PC-9 (cell line): ENCODE measurements at regions of chr17 and their contacts with region 1.

Region 1: GRCh38 chr17:1413281-1413791 is 13.3 kb upstream of the YWHAE start:
- DNase-seq: peak; percentile 83 to 84
- H3K4me3 ChIP-seq: no peak overlapping the region
- H3K27ac ChIP-seq: no peak overlapping the region
- H3K4me1 ChIP-seq: peaks cover 14% of the 10 kb centered on the region
- H3K27me3 ChIP-seq: no peaks in the 10 kb centered on the region
- CTCF ChIP-seq: no peak

Region 2: GRCh38 chr17:726271-726919 is 686.9 kb before region 1 on chr17:
- CTCF ChIA-PET with region 1: no interaction called
- POLR2A ChIA-PET with region 1: interaction called, 31 read pairs
- intact Hi-C with region 1: no loop called
- DNase-seq: no peak
- H3K4me3 ChIP-seq: no peak overlapping the region
- H3K27ac ChIP-seq: no peak overlapping the region
- H3K4me1 ChIP-seq: no peaks in the 10 kb centered on the region
- H3K27me3 ChIP-seq: no peaks in the 10 kb centered on the region
- CTCF ChIP-seq: no peak

Region 3: DNA sequence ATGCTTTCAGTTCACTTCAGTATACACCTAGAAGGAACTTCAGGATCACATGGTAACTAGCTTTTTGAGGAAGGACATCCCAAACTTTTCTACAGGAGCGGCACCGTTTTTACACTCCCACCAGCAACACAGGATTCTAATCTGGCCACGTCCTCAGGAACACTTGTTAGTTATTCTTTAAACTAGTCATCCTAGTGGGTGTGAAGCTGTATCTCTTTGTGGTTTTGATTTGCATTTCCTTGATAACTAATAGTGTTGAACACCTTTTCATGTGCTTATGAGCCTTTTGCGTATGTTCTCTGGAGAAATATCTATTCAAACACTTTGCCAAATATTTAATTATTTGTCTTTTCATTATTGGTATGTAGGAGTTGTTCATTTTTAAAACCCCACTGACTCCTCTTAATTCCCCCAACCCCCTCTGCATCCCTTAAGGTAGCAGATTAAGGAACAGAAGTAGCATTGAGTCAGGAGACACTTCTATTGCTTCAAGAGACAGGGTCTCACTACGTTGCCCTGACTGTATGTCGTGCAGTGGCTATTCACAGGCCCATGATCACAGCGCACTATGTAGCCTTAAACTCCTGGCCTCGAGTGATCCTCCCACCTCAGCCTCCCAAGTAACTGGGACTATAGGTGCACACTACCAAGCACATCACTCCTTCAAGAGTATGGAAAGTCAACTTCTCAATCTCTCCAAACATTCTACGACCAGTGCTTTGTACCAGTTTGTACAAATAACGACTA is 38.7 kb before region 1 on chr17:
- CTCF ChIA-PET with region 1: no interaction called
- POLR2A ChIA-PET with region 1: interaction called, 15 read pairs
- intact Hi-C with region 1: no loop called
- DNase-seq: no peak
- H3K4me3 ChIP-seq: no peak overlapping the region
- H3K27ac ChIP-seq: no peak overlapping the region
- H3K4me1 ChIP-seq: no peaks in the 10 kb centered on the region
- H3K27me3 ChIP-seq: no peaks in the 10 kb centered on the region
- CTCF ChIP-seq: no peak

Region 4: GRCh38 chr17:1379930-1380313 is 33.4 kb before region 1 on chr17:
- CTCF ChIA-PET with region 1: no interaction called
- POLR2A ChIA-PET with region 1: interaction called, 11 read pairs
- intact Hi-C with region 1: no loop called
- DNase-seq: no peak
- H3K4me3 ChIP-seq: no peak overlapping the region
- H3K27ac ChIP-seq: no peak overlapping the region
- H3K4me1 ChIP-seq: 0 out of 2 replicates have a peak, but pooled peaks cover 6% of the 10 kb centered on the region
- H3K27me3 ChIP-seq: no peaks in the 10 kb centered on the region
- CTCF ChIP-seq: no peak

Region 5: GRCh38 chr17:1455797-1456599 is 42.7 kb after region 1 on chr17 and contains the start of gene CRK:
- CTCF ChIA-PET with region 1: no interaction called
- POLR2A ChIA-PET with region 1: no interaction called
- intact Hi-C with region 1: loop called (anchors 2 kb)
- DNase-seq: peak; percentile 84 to 99
- H3K4me3 ChIP-seq: peak within 1 kb of the TSS; percentile 98
- H3K27ac ChIP-seq: peak within 1 kb of the TSS; percentile 59
- H3K4me1 ChIP-seq: peaks cover 27% of the 10 kb centered on the region
- H3K27me3 ChIP-seq: no peaks in the 10 kb centered on the region
- CTCF ChIP-seq: no peak
- total RNA-seq, gene CRK: 57.1 and 57.9 TPM in 2 replicates

Region 6: DNA sequence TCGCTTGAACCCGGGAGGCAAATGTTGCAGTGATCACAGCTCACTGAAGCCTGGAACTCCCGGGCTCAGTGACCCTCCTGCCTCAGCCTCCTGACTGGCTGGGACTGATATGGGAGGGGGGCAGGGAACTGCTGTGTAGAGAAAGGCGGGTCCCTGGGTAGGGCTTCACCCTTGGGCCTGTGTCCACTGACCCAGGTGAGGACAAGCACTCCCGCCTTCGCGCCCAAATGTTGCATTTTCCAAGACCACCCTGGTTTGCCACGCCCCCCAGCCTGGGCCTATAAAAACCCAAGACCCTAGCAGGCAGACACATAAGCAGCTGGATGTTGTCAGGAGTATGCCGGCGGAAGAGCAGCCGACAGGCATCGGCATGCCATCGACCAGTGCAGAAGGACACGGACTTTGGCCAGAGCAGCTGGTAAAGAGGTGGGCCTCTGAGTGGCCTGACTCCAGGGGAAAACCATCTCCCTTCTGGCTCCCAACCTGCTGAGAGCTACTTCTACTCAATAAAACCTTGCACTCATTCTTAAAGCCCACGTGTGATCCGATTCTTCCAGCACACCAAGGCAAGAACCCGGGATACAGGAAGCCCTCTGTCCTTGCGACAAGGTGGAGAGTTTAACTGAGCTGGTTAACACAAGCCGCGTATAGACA is 397.2 kb after region 1 on chr17:
- CTCF ChIA-PET with region 1: no interaction called
- POLR2A ChIA-PET with region 1: no interaction called
- intact Hi-C with region 1: no loop called
- DNase-seq: no peak
- H3K4me3 ChIP-seq: no peak overlapping the region
- H3K27ac ChIP-seq: no peak overlapping the region
- H3K4me1 ChIP-seq: peaks cover 14% of the 10 kb centered on the region; the same call in 1 of the 2 replicates
- H3K27me3 ChIP-seq: no peaks in the 10 kb centered on the region
- CTCF ChIP-seq: no peak